Ascending aorta (tissue), 2 donors: ENCODE measurements at regions of chrX and their contacts with region 1.

Region 1: GRCh38 chrX:136496770-136497598 is at the start of gene HTATSF1:
- DNase-seq: peak; percentile 49 to 93
- H3K4me3 ChIP-seq: peak within 1 kb of the TSS; percentile 58 to 75
- H3K27ac ChIP-seq: peak within 1 kb of the TSS; percentile 86 to 93
- H3K4me1 ChIP-seq: no peaks in the 10 kb centered on the region
- H3K27me3 ChIP-seq: peaks cover 3% of the 10 kb centered on the region
- CTCF ChIP-seq: peak in 1 of 3 experiments; percentile 3
- total RNA-seq, gene HTATSF1: 3.7 TPM

Region 2: GRCh38 chrX:136185409-136186022 is 311.5 kb before region 1 on chrX:
- intact Hi-C with region 1: no loop called
- DNase-seq: no peak
- H3K4me3 ChIP-seq: peak overlapping the region in 1 of 2 donors; percentile 1
- H3K27ac ChIP-seq: peak overlapping the region; percentile 39 to 59
- H3K4me1 ChIP-seq: peaks cover 0 to 47% of the 10 kb centered on the region in 2 donors
- H3K27me3 ChIP-seq: no peaks in the 10 kb centered on the region
- CTCF ChIP-seq: no peak

Region 3: GRCh38 chrX:136268051-136269048 is 228.6 kb before region 1 on chrX:
- intact Hi-C with region 1: loop called (anchors 5 kb)
- DNase-seq: no peak
- H3K4me3 ChIP-seq: no peak overlapping the region
- H3K27ac ChIP-seq: no peak overlapping the region
- H3K4me1 ChIP-seq: no peaks in the 10 kb centered on the region
- H3K27me3 ChIP-seq: no peaks in the 10 kb centered on the region
- CTCF ChIP-seq: peak; percentile 32 to 80 (median 77)

Region 4: DNA sequence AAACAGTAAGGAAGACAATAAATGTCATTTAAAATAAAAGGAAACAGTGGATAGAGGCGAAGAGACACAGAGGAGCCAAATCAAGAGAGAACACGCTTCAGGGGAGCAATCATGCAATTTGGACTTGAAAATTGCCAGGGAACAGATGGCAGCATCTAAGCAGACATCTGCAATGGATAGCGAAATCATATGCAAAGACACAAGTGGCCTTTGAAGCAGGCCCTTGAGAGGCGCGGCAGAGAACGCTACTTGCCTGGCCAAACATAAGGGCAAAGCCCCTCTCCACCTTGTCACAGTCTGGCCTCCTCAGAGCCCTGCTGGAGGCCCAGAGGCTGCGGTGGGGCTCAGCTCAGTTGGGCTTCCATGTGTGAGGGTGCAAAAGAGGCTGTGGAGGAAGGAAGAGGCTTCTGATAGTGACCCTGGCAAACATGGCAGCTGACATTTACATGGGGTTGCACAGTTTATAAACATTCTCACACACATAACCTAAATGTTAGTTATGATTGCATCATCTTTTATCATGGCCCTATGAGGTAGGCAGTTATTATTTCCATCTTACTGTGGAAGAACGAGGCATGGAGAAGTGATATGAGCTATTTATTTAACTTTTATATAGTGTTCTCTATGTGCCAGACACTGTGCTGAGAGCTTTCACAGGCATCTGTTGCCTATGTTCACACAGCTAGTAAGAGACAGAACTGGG is 177.9 kb before region 1 on chrX:
- intact Hi-C with region 1: no loop called
- DNase-seq: no peak
- H3K4me3 ChIP-seq: no peak overlapping the region
- H3K27ac ChIP-seq: no peak overlapping the region
- H3K4me1 ChIP-seq: no peaks in the 10 kb centered on the region
- H3K27me3 ChIP-seq: no peaks in the 10 kb centered on the region
- CTCF ChIP-seq: no peak